ENCODE measurements at regions of chr3 and their contacts with region 1.

Region 1: DNA sequence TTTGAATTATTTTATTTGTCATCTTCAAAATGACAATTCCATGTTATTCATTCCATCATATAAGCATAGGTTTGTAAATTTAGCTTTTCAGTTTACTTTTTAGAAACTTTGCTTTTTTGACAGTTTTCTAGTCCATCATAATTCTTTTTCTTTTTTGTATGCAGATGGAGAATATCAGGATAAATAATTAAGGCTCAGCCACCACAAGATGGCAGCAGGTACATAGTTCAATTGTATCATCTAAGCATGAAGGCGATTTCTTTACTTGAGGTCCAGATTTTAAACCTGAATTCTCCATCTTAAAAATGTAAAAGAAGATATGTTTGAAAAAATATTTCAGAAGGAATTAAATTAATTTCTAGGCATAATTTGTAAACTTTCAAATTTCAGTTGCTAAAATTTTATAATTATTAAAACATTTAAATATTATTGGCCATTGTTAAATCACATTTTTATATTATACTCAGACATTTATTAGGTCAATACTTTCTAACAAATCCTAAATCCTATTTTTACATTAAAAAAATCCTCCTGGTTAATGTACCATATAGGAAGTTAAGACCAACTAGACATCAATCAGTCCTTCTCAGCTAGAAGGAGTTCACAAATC is 15.1 kb downstream of the PLSCR5 start:
- DNase-seq: peak; percentile 13
- CTCF ChIP-seq: peak; percentile 58

Region 2: DNA sequence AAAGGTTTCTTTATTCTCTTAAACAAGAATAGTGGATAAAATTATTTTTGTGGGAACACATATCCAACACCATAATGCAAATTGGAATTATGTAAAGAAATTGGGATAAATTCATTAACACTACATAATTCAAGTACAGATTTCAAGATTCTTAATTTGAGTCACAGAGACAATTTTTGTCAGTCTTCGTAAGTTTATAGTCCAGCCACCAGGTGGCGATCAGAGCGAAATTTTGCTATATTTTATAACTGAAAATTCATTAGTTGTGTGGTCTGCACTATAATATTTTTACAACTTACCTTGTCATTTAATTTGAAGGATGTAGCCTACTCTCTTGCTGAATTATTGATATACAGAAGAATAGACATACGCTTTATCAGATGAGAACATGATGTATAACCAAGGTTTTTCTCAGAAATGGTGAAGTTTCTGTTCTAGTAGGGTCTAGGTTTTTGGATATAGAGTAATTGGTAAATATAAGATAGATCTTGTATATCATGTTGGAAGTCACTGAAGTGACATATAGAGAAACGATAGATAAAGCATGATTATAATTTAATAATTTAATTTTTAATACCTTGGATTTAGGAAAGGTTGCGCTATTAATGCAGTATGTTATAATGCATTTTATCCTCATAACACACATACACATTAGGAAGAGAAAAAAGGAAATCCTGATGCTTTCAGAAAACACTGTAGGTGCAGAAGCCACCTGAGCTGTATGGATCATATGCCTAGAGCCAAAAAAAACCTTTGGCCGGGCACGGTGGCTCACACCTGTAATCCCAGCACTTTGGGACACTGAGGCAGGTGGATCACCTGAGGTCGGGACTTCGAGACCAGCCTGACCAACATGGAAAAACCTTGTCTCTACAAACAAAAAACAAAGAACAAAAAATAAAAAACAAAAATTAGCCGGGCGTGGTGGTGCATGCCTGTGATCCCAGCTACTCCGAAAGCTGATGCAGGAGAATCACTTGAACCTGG is 370.8 kb before region 1 on chr3:
- in situ Hi-C with region 1: loop called (anchors 10 kb)
- DNase-seq: peak; percentile 34
- CTCF ChIP-seq: peak; percentile 62

Region 3: GRCh38 chr3:146491303-146491702 is 98.7 kb before region 1 on chr3:
- in situ Hi-C with region 1: no loop called
- DNase-seq: no peak
- CTCF ChIP-seq: no peak

Measured in GM13977 (cell line).